ENCODE measurements at regions of chr12 and their contacts with region 1.

Region 1: GRCh38 chr12:100741084-100741711 is 53.4 kb upstream of the ANO4 start:
- DNase-seq: peak; percentile 72
- ATAC-seq: peak; percentile 64
- H3K4me3 ChIP-seq: no peak overlapping the region
- H3K27ac ChIP-seq: no peak overlapping the region
- H3K4me1 ChIP-seq: no peaks in the 10 kb centered on the region
- H3K27me3 ChIP-seq: peaks cover 16% of the 10 kb centered on the region
- CTCF ChIP-seq: peak; percentile 93

Region 2: GRCh38 chr12:100234598-100235304 is 506.4 kb before region 1 on chr12:
- CTCF ChIA-PET with region 1: no interaction called
- POLR2A ChIA-PET with region 1: no interaction called
- intact Hi-C with region 1: loop called (anchors 2 kb)
- DNase-seq: peak; percentile 81
- ATAC-seq: peak; percentile 65
- H3K4me3 ChIP-seq: peak overlapping the region; percentile 53
- H3K27ac ChIP-seq: peak overlapping the region; percentile 66
- H3K4me1 ChIP-seq: peaks cover 34% of the 10 kb centered on the region
- H3K27me3 ChIP-seq: no peaks in the 10 kb centered on the region
- CTCF ChIP-seq: peak; percentile 93

Region 3: DNA sequence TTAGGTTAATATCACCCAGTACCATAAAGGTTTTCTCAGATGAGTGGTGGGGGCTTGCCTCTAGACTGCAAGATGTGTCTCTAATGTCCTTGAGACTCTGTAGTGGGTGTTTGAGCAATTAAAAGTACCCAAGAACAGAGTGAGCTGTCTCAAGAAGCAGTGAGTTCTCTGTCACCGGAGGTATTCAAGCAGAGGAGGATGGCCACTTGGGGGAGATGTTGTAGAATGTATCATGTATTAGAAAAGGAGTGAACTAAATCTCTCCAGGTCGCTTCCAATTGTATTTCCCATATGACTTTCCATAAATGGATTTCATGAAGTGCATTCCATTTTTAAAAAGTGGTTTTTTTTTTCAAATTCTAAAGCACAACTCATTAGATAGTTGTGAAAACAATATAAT is 349.3 kb before region 1 on chr12:
- CTCF ChIA-PET with region 1: no interaction called
- POLR2A ChIA-PET with region 1: no interaction called
- intact Hi-C with region 1: loop called (anchors 2 kb)
- DNase-seq: peak; percentile 54
- ATAC-seq: peak; percentile 74
- H3K4me3 ChIP-seq: no peak overlapping the region
- H3K27ac ChIP-seq: no peak overlapping the region
- H3K4me1 ChIP-seq: no peaks in the 10 kb centered on the region
- H3K27me3 ChIP-seq: peaks cover 17% of the 10 kb centered on the region
- CTCF ChIP-seq: peak; percentile 67

Region 4: GRCh38 chr12:100668945-100669536 is 72.2 kb before region 1 on chr12:
- CTCF ChIA-PET with region 1: no interaction called
- POLR2A ChIA-PET with region 1: no interaction called
- intact Hi-C with region 1: loop called (anchors 1 kb)
- DNase-seq: peak; percentile 87
- ATAC-seq: peak; percentile 96
- H3K4me3 ChIP-seq: no peak overlapping the region
- H3K27ac ChIP-seq: no peak overlapping the region
- H3K4me1 ChIP-seq: no peaks in the 10 kb centered on the region
- H3K27me3 ChIP-seq: peaks cover 19% of the 10 kb centered on the region
- CTCF ChIP-seq: peak; percentile 98

Measured in PC-3 (cell line).